GM12878 (cell line): ENCODE measurements at regions of chr2 and their contacts with region 1.

Region 1: DNA sequence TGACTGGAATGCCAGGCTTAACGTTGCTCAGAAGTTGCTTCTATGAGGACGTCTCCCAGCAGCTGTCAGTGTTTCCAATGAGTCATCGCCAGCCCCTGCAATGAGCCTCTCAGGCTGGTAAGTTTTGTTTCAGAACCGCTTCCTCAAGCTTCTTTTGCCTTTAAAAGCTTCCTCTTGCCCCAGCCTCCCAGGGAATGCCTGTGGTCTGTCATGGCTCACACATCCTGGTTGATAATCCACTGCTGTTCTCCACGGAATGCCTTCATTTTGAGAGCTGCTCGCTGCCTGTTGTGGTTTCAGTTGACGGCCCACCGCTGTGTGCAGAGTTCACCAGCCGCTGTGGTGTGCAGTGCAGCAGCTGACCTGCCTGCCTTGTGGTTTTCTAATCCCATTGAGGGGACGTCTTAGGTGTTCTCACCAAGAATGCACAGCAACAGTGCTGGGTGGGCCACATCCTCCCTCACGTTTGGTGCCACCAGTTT is 96.4 kb downstream of the RTP5 start:
- DNase-seq: peak; percentile 65
- ATAC-seq: peak; percentile 97
- H3K4me3 ChIP-seq: peak overlapping the region; percentile 55; the same call in 1 of the 2 replicates
- H3K27ac ChIP-seq: peak overlapping the region; percentile 73
- H3K4me1 ChIP-seq: peaks cover 24% of the 10 kb centered on the region
- H3K27me3 ChIP-seq: no peaks in the 10 kb centered on the region
- CTCF ChIP-seq: no peak
- EP300 ChIP-seq: 0 out of 4 replicates have a peak, but pooled peaks of 1 of the 2 experiments have one; percentile 34
- POLR2A ChIP-seq: peak; percentile 51; the same call in 1 of the 2 replicates
- RAD21 ChIP-seq: no peak

Region 2: DNA sequence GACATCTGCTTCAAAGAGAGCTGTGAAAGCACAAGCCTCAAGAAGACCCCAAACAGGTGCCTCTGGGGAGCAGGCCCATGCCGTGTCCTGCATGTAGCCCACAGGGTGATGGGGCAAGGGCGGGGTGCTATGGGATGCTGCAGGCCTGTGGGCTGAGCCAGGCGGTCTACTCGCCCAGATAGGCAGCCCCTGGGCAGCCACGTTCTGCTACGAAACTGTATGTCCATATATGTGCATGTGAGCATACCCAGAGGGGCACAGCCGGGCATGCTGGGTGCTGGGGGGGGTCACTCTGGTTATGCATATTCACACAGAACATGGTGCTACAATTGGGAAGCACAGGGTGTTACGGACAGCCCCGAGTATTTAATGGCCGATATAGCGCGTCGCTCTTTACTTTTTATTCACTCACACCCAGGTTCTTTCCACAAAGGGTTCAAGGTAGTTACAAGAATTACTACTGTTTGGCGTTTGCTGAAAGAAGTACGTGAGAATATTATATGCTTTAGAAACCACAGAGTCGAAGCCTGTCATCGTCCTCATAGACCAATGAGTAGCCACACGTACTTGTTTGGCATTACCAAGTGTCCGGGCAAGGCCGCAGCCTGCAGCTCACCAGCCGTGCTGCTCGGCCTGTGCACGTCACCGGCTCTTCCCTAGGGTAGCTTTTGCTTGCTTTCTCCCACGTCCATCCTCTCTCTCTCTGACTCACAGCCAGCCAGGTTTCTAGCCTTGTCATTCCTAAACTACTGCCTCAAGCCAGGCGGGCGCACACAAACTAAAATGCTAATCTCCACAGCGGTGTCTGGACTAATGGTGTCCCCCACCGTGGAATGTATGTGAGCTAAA is 878.3 kb before region 1 on chr2:
- CTCF ChIA-PET with region 1: no interaction called
- POLR2A ChIA-PET with region 1: no interaction called
- RAD21 ChIA-PET with region 1: no interaction called
- SMC1A ChIA-PET with region 1: no interaction called
- in situ Hi-C with region 1: no loop called
- intact Hi-C with region 1: no loop called
- DNase-seq: peak; percentile 78
- ATAC-seq: peak; percentile 88
- H3K4me3 ChIP-seq: no peak overlapping the region
- H3K27ac ChIP-seq: peak overlapping the region; percentile 88
- H3K4me1 ChIP-seq: peaks cover 19% of the 10 kb centered on the region
- H3K27me3 ChIP-seq: no peaks in the 10 kb centered on the region
- CTCF ChIP-seq: no peak
- EP300 ChIP-seq: peak; percentile 78 to 92; a peak in 3 of 4 replicates
- POLR2A ChIP-seq: no peak; the same call in 1 of the 2 replicates
- RAD21 ChIP-seq: no peak

Region 3: GRCh38 chr2:241760301-241760771 is 205.6 kb before region 1 on chr2:
- CTCF ChIA-PET with region 1: no interaction called
- POLR2A ChIA-PET with region 1: no interaction called
- RAD21 ChIA-PET with region 1: no interaction called
- SMC1A ChIA-PET with region 1: no interaction called
- in situ Hi-C with region 1: no loop called
- intact Hi-C with region 1: no loop called
- DNase-seq: no peak
- ATAC-seq: no peak
- H3K4me3 ChIP-seq: no peak overlapping the region
- H3K27ac ChIP-seq: no peak overlapping the region
- H3K4me1 ChIP-seq: peaks cover 11% of the 10 kb centered on the region
- H3K27me3 ChIP-seq: no peaks in the 10 kb centered on the region
- CTCF ChIP-seq: no peak
- EP300 ChIP-seq: no peak
- POLR2A ChIP-seq: no peak
- RAD21 ChIP-seq: no peak

Region 4: DNA sequence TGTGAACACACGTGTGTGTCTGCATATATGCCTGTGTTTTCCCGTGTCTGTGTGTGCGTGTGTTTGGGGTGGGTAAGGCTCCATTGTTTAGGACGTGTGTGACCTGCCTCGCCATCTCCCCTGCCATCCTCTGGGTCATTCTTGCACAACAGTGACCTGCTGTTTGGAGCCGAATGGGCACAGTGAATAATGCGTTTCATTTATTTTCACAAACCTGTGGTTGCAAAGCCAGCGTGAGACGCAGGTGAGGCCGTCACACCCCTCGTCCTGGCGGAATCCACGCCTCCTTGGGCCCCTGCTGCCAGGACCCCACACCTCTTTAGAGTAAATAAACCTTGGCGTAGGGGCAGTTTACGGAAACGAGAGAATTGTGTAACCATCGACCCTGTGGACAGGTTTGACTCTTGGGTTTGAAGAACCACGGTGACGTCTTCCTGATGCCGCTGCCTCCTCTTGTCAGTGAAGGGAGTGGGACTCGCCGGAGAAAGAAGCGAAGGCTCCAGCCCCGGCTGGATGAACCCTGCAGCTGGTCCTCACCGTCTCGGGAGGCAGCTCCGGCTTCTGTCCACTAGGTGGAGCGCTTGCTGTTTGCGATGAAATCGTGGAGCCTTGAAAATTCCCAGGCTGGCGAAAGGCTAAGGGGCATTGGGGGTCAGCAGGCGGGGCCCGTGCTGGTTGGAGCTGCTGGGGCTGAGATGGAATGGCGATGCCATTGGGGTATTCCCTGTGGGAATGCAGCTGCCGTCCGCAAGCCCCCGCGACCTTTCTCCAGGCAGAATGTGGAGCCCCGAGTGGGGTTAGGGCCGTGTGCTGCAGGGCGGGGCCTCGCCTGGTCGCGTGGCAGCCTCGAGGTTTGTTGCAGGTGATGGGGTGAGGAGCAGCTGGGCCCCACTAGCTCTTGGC is 15.3 kb before region 1 on chr2:
- CTCF ChIA-PET with region 1: interaction called, 24 read pairs
- POLR2A ChIA-PET with region 1: no interaction called
- RAD21 ChIA-PET with region 1: interaction called, 7 read pairs
- SMC1A ChIA-PET with region 1: interaction called, 3 read pairs
- in situ Hi-C with region 1: no loop called
- intact Hi-C with region 1: no loop called
- DNase-seq: no peak
- ATAC-seq: peak; percentile 91
- H3K4me3 ChIP-seq: no peak overlapping the region
- H3K27ac ChIP-seq: no peak overlapping the region
- H3K4me1 ChIP-seq: no peaks in the 10 kb centered on the region
- H3K27me3 ChIP-seq: no peaks in the 10 kb centered on the region
- CTCF ChIP-seq: peak; percentile 87 to 92 (median 89)
- EP300 ChIP-seq: no peak
- POLR2A ChIP-seq: no peak
- RAD21 ChIP-seq: peak; percentile 95

Region 5: DNA sequence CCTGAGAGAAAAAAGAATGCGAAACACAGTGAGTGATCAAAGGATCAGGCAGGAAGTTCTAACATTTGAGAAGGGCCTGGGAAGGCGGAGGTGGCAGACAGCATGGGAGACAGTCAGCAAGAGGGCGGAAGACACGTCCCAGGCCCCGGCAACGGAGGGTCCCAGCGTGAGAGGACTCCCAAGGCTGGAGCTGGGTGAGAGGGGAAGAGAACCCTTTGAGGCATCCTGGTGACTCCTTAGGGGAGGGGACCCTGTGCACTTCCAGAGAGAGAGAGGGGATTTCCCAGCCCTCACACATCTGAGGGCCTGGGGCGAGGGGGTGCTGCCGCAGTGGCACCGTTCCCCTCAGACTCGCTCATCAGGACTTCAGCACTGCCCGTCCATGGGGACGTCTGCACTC is 37.0 kb after region 1 on chr2:
- CTCF ChIA-PET with region 1: no interaction called
- POLR2A ChIA-PET with region 1: no interaction called
- RAD21 ChIA-PET with region 1: no interaction called
- SMC1A ChIA-PET with region 1: no interaction called
- in situ Hi-C with region 1: no loop called
- intact Hi-C with region 1: no loop called
- DNase-seq: no peak
- ATAC-seq: no peak
- H3K4me3 ChIP-seq: no peak overlapping the region
- H3K27ac ChIP-seq: no peak overlapping the region
- H3K4me1 ChIP-seq: no peaks in the 10 kb centered on the region
- H3K27me3 ChIP-seq: no peaks in the 10 kb centered on the region
- CTCF ChIP-seq: no peak
- EP300 ChIP-seq: no peak
- POLR2A ChIP-seq: no peak
- RAD21 ChIP-seq: no peak

Region 6: DNA sequence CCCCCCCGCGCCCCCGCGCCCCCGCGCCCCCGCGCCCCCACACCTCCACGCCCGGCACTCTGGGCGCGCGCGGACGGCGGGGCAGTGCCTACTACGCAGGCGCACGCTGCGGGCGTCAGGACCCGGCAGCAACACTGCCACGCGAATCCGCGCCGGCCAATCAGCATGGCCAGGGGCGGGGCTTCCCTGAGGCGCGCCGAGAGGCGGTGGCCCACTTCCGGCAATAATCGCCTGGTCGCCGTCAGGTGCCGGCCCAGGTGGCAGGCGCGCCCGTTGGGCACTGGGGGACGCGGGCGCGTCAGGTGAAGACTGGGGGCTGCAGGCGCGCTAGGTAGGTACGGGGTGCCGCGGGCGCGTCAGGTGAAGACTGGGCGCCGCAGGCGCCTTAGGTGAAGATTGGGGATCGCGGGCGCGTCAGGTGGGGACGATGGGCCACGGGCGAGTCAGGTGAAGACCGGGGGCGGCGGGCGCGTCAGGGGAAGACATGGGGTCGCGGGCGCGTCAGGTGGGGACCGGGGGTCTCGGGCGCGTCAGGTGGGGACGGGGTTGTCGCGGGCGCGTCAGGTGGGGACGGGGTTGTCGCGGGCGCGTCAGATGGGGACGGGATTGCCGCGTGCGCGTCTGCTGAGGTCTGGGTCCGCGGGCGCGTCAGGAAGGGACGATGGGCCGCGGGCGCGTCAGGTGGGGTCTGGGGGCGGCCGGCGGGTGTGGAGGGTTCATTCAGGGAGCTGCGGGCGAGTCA is 122.7 kb after region 1 on chr2:
- CTCF ChIA-PET with region 1: no interaction called
- POLR2A ChIA-PET with region 1: no interaction called
- RAD21 ChIA-PET with region 1: no interaction called
- SMC1A ChIA-PET with region 1: interaction called, 3 read pairs
- in situ Hi-C with region 1: no loop called
- intact Hi-C with region 1: loop called (anchors 5 kb)
- DNase-seq: peak; percentile 46
- ATAC-seq: peak; percentile 88
- H3K4me3 ChIP-seq: peak overlapping the region; percentile 78
- H3K27ac ChIP-seq: no peak overlapping the region
- H3K4me1 ChIP-seq: peaks cover 7% of the 10 kb centered on the region
- H3K27me3 ChIP-seq: no peaks in the 10 kb centered on the region
- CTCF ChIP-seq: no peak
- EP300 ChIP-seq: no peak
- POLR2A ChIP-seq: peak; percentile 81
- RAD21 ChIP-seq: no peak